Caco-2 (cell line): ENCODE measurements at regions of chr9 and their contacts with region 1.

Region 1: DNA sequence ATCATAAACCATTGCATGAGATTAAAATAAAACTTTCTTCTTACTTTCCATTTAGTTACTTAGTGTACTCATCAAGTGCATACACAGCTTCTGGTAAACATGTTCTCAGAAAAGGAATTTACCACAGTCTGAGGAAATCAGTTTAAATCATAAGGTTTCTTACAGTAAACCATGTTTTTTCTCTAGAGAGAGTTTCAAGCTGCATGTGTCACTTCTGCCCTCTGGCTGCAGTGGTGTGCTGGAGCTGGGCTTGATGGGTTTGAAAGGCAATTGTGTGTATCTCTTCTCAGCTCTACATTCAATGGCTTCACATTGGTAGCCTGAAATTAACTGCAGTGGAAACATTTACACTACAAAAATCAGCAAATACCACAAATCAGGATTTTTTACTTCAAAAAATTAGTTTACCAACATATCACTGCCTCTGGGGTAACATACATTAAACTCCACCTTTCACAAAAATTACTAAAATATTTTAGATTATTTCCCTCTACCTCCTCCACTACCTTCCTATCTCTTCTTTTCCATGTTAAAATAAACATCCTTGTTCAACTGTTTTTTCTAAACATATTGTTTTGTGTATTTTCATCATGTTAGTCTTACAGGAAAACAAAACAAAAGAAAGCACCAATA is 414.3 kb downstream of the ANXA1 start:
- DNase-seq: peak; percentile 5 to 23
- H3K4me3 ChIP-seq: no peak overlapping the region
- H3K4me3 Mint-ChIP-seq: no peak overlapping the region
- H3K27ac Mint-ChIP-seq: no peak overlapping the region
- H3K4me1 ChIP-seq: no peaks in the 10 kb centered on the region
- H3K4me1 Mint-ChIP-seq: no peaks in the 10 kb centered on the region
- H3K27me3 ChIP-seq: no peaks in the 10 kb centered on the region
- H3K27me3 Mint-ChIP-seq: no peaks in the 10 kb centered on the region
- CTCF ChIP-seq: peak; percentile 24 to 53

Region 2: DNA sequence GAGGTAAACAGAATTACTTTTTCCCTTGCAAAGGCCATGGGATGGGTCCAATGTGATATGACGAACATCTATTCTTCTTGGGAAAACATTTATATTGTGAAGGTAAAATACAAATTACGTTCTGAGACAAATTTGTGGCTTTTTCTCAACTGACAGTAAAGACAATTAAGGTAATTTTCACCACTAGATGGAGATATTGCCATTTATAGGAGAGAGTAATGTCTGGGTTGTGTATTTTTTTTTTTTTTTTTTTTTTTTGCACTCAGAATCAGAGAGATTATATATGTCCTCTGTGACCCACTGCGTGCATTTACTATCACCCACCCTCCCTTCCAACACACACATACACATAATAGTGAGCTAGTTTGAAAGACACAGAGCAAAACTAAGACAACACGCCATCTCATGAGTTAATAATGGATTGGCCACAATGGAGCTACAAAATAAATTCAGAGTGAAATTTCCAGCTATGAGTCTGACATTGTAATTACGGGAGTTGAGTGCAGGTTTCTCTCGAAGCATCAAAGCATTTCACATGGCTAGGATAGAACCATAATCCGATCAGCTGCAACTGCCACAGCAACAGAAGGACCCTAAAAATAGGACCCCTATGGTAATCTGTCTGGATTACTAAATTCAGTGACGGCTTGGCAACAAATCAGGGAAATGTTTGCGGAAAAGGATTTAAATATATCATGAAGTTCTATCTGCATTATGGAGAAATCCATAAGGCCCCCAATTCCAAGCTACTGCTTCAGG is 365.1 kb before region 1 on chr9:
- CTCF ChIA-PET with region 1: no interaction called
- POLR2A ChIA-PET with region 1: no interaction called
- intact Hi-C with region 1: loop called (anchors 2 kb)
- DNase-seq: no peak
- H3K4me3 ChIP-seq: no peak overlapping the region
- H3K4me3 Mint-ChIP-seq: no peak overlapping the region
- H3K27ac Mint-ChIP-seq: no peak overlapping the region
- H3K4me1 ChIP-seq: no peaks in the 10 kb centered on the region
- H3K4me1 Mint-ChIP-seq: no peaks in the 10 kb centered on the region
- H3K27me3 ChIP-seq: no peaks in the 10 kb centered on the region
- H3K27me3 Mint-ChIP-seq: no peaks in the 10 kb centered on the region
- CTCF ChIP-seq: peak in 1 of 2 experiments; percentile 19

Region 3: DNA sequence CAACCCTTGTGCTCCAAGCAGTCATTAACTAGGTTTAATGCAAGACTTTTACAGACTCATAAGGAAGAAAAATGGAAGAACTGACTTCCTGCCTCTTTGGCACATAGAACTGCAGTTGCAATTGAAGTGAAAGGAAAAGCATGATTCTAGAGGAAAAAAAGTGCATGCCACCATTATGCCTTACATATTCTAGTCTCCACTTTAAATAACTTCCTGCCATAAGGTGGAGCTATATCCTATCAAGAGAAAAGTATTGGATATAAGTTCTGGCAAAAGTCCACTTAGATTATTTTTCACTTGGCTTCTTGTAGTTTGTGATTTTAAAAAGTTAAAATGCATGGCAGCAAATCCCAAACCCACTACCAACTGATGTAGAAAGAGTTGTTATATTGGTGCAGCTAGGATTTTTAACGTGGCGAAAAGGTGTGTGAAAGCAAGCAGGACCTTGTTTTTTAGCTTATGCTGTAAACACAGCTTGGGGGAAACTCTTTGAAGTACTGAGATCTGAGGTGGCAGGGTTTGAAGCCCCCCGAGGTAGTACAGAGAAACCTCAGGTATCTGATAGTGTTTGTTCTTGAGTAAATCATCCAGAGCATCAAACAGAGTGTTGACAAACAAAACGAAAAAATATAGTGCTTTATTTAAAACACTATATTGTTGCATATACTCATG is 296.4 kb before region 1 on chr9:
- CTCF ChIA-PET with region 1: interaction called, 6 read pairs
- POLR2A ChIA-PET with region 1: no interaction called
- intact Hi-C with region 1: loop called (anchors 1 kb)
- DNase-seq: peak in 1 of 2 experiments; percentile 0
- H3K4me3 ChIP-seq: no peak overlapping the region
- H3K4me3 Mint-ChIP-seq: no peak overlapping the region
- H3K27ac Mint-ChIP-seq: no peak overlapping the region
- H3K4me1 ChIP-seq: no peaks in the 10 kb centered on the region
- H3K4me1 Mint-ChIP-seq: peaks cover 7% of the 10 kb centered on the region
- H3K27me3 ChIP-seq: no peaks in the 10 kb centered on the region
- H3K27me3 Mint-ChIP-seq: no peaks in the 10 kb centered on the region
- CTCF ChIP-seq: peak in 1 of 2 experiments; percentile 19

Region 4: DNA sequence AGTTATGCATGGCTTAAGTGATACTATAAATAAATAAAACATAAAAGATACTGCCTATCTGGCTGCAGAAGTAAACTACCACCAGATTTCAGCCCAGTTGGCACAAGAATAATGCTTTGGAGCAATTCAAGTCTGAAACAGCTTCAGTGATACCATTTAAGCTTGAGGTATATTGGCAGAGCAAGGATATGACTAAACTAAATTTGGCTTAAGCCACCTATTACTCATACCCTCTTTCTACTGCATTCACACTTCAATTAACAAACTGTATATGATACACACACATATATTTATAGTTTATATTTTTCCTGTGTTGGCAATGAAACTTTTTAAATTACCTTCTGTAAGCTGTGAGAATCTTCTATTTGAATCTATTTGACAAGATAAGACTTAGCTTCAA is 17.6 kb after region 1 on chr9:
- CTCF ChIA-PET with region 1: no interaction called
- POLR2A ChIA-PET with region 1: no interaction called
- intact Hi-C with region 1: no loop called
- DNase-seq: no peak
- H3K4me3 ChIP-seq: no peak overlapping the region
- H3K4me3 Mint-ChIP-seq: no peak overlapping the region
- H3K27ac Mint-ChIP-seq: no peak overlapping the region
- H3K4me1 ChIP-seq: no peaks in the 10 kb centered on the region
- H3K4me1 Mint-ChIP-seq: no peaks in the 10 kb centered on the region
- H3K27me3 ChIP-seq: no peaks in the 10 kb centered on the region
- H3K27me3 Mint-ChIP-seq: no peaks in the 10 kb centered on the region
- CTCF ChIP-seq: no peak